ENCODE measurements at regions of chr7 and their contacts with region 1.

Region 1: GRCh38 chr7:142375666-142376313 is 117.9 kb upstream of the PRSS58 start:
- DNase-seq: peak; percentile 99 to 100
- H3K4me3 ChIP-seq: peak overlapping the region; percentile 8; the same call in 1 of the 2 replicates
- H3K27ac ChIP-seq: peak overlapping the region; percentile 87
- H3K4me1 ChIP-seq: peaks cover 54% of the 10 kb centered on the region
- H3K27me3 ChIP-seq: no peaks in the 10 kb centered on the region
- CTCF ChIP-seq: peak; percentile 97

Region 2: DNA sequence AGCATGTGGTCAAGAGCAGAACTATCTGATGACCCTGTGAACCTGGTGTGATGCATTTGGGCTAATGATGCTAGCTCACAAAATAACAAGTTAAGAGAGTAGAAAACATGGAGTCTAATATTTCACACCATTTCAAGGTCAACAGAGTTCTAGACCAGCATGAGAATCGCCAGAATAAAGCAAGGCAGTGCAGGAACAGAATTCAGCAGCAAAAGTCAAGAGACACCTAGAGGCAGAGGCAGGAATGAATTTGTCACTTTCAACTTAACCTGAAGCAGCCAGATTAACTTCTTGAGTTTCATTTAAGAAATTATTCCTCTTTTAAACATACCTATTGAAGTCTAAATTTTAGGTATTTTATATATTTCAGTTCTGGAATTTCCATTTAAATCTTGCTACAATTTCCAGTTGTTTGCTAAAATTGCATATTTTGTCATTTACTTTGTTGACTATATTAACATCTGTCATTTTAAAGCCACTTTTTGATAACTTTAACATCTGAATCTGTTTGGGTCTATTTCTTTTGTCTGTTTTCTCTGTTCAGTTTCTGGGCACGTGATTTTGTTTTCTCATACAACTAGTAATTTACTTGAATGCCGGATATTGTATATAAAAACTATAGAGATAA is 73.8 kb before region 1 on chr7:
- CTCF ChIA-PET with region 1: no interaction called
- POLR2A ChIA-PET with region 1: interaction called, 31 read pairs
- intact Hi-C with region 1: no loop called
- DNase-seq: no peak
- H3K4me3 ChIP-seq: no peak overlapping the region
- H3K27ac ChIP-seq: no peak overlapping the region
- H3K4me1 ChIP-seq: no peaks in the 10 kb centered on the region
- H3K27me3 ChIP-seq: no peaks in the 10 kb centered on the region
- CTCF ChIP-seq: 0 out of 2 replicates have a peak, but pooled peaks have one; percentile 35

Region 3: DNA sequence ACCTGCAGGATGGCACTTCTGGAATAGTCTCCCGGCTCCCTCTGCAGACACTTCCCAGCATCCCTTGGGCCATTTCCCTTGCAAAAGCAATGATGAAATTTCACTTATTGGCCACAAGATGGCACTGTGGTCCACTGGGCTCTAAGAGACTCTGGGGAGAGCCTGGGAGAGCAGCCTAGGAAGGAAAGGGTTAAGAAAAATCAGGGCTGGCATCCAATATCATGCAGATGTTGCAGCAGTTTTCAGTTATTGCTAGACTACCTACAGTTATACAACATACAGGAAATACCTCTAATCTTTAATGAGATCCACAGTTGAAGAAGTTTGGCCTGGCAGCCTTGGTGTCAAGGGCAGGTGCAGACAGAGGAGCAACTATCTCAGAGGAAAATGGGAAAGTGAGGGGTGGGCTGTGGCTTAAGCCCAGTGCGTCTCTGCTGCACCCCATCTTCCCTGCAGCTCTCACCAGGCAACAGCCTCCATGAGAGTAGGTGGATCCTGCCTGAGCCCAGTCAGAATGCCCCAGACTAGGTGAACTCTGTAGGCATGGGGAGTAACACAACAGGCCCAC is 17.8 kb before region 1 on chr7:
- CTCF ChIA-PET with region 1: interaction called, 5 read pairs
- POLR2A ChIA-PET with region 1: no interaction called
- intact Hi-C with region 1: loop called (anchors 1 kb)
- DNase-seq: peak; percentile 71 to 75
- H3K4me3 ChIP-seq: peak overlapping the region; percentile 27; the same call in 1 of the 2 replicates
- H3K27ac ChIP-seq: peak overlapping the region; percentile 0; the same call in 1 of the 2 replicates
- H3K4me1 ChIP-seq: peaks cover 28% of the 10 kb centered on the region
- H3K27me3 ChIP-seq: no peaks in the 10 kb centered on the region
- CTCF ChIP-seq: peak; percentile 98

Region 4: DNA sequence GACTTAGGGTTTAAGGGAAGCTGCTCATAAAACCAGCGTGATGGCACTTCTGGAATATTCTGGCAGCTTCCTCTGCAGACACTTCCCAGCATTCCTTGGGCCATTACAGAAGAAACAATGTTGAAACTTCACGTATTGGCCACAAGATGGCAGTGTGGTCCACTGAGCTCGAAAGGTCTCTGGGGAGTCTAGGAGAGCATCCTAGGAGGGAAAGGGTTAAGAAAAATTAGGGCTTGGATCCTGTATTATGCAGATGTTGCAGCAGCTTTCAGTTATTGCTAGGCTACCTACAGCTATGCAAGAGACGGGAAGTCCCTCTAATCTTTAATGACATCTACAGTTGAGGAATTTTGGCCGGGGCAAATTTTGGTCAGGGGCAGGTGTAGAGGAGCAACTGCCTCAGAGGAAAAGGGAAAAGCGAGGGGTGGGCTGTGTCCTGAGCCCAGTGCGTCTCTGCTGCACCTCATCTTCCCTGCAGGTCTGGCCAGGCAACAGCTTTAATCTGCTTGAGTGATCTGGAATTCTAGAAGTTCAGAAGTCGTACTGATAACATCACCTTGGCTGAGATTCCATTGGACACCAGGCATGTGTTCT is 102.8 kb after region 1 on chr7:
- CTCF ChIA-PET with region 1: interaction called, 9 read pairs
- POLR2A ChIA-PET with region 1: no interaction called
- intact Hi-C with region 1: loop called (anchors 1 kb)
- DNase-seq: peak; percentile 58 to 74
- H3K4me3 ChIP-seq: no peak overlapping the region
- H3K27ac ChIP-seq: no peak overlapping the region
- H3K4me1 ChIP-seq: peaks cover 16% of the 10 kb centered on the region
- H3K27me3 ChIP-seq: no peaks in the 10 kb centered on the region
- CTCF ChIP-seq: peak; percentile 91

Region 5: DNA sequence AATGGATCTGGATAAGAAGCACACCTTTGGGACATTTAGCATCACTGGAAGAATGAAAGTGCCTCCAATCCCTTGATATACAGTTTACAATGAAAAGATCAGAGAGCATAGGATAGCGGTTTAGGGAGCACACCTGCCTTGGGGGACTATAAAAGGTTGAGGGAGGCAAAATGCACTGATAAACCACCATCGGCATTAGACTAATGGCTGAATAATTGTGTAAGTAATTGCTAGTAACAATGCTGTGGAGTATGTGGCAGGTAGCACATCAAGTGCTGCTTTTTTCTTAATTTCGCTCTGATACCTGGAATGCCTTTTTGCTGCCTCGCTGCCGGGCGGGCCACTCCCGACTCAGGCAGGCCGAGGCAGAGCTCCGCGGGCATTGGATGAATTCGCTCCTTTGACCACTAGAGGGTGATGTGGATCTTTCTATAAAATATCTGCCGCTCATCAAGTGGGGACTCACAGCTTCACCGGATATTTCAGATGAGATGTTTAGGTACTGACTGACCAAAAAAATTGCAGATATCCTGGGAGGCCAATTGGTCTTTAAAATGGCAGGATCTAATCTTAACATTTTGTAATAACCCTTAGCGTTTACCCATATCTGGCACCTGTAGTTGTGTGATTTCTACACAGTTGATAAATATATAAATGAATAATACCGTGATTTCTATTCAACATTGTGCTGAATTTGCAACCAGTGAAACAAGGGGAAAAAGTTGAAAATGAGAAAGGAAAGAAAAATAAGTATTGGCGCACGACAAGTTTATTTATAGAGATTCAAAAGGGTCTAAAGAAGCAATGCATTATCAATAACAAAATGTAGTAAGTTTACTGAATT is 256.7 kb after region 1 on chr7:
- CTCF ChIA-PET with region 1: interaction called, 4 read pairs
- POLR2A ChIA-PET with region 1: interaction called, 6 read pairs
- intact Hi-C with region 1: loop called (anchors 1 kb)
- DNase-seq: peak; percentile 70 to 72
- H3K4me3 ChIP-seq: no peak overlapping the region
- H3K27ac ChIP-seq: no peak overlapping the region
- H3K4me1 ChIP-seq: no peaks in the 10 kb centered on the region
- H3K27me3 ChIP-seq: no peaks in the 10 kb centered on the region
- CTCF ChIP-seq: peak; percentile 93

Region 6: GRCh38 chr7:142960955-142961512 is 585.2 kb after region 1 on chr7:
- CTCF ChIA-PET with region 1: interaction called, 3 read pairs
- POLR2A ChIA-PET with region 1: no interaction called
- intact Hi-C with region 1: loop called (anchors 2 kb)
- DNase-seq: no peak
- H3K4me3 ChIP-seq: no peak overlapping the region
- H3K27ac ChIP-seq: no peak overlapping the region
- H3K4me1 ChIP-seq: peaks cover 26% of the 10 kb centered on the region
- H3K27me3 ChIP-seq: no peaks in the 10 kb centered on the region
- CTCF ChIP-seq: peak; percentile 60

Measured in PC-9 (cell line).